SK-N-SH (cell line): ENCODE measurements at regions of chr2 and their contacts with region 1.

Region 1: DNA sequence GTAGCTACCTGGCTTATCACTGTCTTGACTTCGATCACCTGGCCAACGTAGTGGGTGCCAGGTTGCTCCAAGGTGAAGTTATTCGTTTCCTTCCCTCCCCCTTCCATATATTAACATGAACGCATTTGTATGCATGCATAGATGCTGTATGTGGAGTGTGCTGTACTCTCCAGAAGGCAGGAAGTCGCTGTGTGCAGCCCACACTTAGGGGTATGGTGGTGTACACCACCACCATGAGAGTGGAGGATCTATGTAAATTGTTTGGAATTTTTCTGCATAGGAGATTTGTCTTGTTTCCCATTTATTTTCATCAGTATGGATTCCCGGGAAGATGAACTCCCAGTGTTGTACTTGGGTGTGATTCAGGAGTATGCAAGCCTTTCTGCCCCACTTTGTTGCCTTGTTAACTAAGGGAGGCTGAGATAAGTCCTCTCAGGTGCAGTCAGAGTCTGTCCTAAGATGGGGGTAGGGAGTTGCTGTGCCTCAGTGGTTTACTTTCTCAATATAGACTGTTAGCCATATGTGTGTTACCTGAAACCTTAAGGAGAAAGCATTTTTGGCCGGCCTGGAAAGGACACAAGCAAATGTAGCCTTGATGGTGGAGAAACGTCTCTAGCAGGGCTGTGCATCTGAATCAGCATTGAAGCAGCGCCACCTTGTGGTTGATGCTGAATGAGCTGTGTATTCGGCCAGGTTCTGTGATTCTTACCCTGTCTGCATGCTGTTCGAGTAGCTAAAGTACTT is 149.8 kb downstream of the TANC1 start:
- DNase-seq: peak; percentile 70
- H3K4me3 ChIP-seq: no peak overlapping the region; a peak in 1 of 4 replicates
- H3K27ac ChIP-seq: peak overlapping the region; percentile 41 to 69
- H3K4me1 ChIP-seq: peaks cover 6 to 25% of the 10 kb centered on the region in 2 experiments; a peak in 3 of 4 replicates
- H3K27me3 ChIP-seq: no peaks in the 10 kb centered on the region
- CTCF ChIP-seq: peak; percentile 86
- EP300 ChIP-seq: no peak
- RAD21 ChIP-seq: peak; percentile 98

Region 2: DNA sequence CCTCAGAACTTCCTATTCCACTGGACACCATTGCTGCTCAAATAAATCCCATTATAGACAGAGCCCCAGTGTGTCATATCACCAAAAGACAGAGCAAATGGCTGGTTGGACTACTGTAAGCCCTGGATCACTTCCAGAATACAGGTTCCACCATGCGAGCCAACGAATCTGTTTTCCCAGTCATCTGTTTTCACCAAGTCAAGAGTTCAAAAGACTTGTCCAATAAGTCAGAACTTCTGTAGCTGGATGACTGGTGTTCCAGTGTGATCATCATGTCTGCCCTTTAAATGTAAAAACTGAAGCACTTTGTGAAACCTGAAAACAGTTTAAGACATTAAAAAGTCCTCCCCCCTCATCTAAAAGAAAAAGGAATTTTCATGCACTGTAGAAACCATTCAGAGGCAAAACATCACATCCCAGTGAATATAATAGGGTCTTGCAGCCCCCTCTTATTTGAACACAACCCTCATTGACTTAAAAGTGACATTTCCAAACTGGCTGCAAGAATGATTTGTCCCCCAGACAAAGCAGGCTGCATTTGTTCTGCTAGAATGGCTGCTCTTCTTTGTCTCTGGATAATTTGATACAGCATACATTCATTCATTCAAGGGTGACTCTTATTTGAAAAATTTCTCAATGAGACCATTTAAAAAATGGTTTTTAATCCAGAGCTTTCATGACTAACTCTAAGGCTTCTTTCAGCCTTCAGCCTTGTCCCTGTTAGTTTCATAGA is 214.4 kb before region 1 on chr2:
- CTCF ChIA-PET with region 1: interaction called, 39 read pairs
- POLR2A ChIA-PET with region 1: no interaction called
- DNase-seq: no peak
- H3K4me3 ChIP-seq: no peak overlapping the region
- H3K27ac ChIP-seq: no peak overlapping the region
- H3K4me1 ChIP-seq: peaks cover 0 to 4% of the 10 kb centered on the region in 2 experiments; a peak in 1 of 4 replicates
- H3K27me3 ChIP-seq: no peaks in the 10 kb centered on the region
- CTCF ChIP-seq: no peak
- EP300 ChIP-seq: no peak
- RAD21 ChIP-seq: no peak

Region 3: DNA sequence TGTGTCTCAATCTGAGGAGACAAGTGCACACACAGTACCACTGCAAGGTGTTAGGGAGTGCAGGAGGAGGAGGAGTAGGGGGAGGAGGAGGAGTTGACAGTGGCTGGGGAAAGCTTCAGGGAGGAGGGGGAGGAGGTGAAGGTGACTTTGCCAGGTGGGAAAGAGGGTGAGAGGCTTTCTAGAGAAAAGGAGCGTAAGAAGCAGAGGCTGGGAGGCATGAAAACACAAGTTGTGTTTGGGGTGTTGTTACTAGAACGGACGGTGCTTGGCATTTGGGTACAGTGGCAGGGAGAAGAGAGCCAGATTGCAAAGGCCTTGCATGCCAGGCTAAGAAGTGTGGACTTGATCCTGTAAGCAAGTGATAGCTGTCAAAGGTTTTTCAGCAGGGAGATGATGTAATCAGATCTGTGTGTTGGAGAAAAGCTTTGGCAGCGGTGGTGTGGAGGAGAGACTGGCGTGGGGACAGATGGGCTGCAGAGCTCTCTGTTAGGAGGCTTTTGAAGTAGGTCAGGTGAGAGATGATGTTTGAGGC is 133.6 kb before region 1 on chr2:
- CTCF ChIA-PET with region 1: interaction called, 14 read pairs
- POLR2A ChIA-PET with region 1: no interaction called
- DNase-seq: peak; percentile 39
- H3K4me3 ChIP-seq: no peak overlapping the region
- H3K27ac ChIP-seq: peak overlapping the region in 1 of 2 experiments; percentile 11; a peak in 1 of 4 replicates
- H3K4me1 ChIP-seq: peaks cover 0 to 10% of the 10 kb centered on the region in 2 experiments; a peak in 2 of 4 replicates
- H3K27me3 ChIP-seq: no peaks in the 10 kb centered on the region
- CTCF ChIP-seq: no peak
- EP300 ChIP-seq: no peak
- RAD21 ChIP-seq: no peak

Region 4: GRCh38 chr2:159053161-159054031 is 64.9 kb before region 1 on chr2:
- CTCF ChIA-PET with region 1: interaction called, 37 read pairs
- POLR2A ChIA-PET with region 1: no interaction called
- DNase-seq: peak; percentile 44
- H3K4me3 ChIP-seq: no peak overlapping the region
- H3K27ac ChIP-seq: peak overlapping the region; percentile 94 to 99
- H3K4me1 ChIP-seq: peaks cover 0 to 76% of the 10 kb centered on the region in 2 experiments; a peak in 2 of 4 replicates
- H3K27me3 ChIP-seq: no peaks in the 10 kb centered on the region
- CTCF ChIP-seq: no peak
- EP300 ChIP-seq: peak; percentile 43 to 90; a peak in 3 of 4 replicates
- RAD21 ChIP-seq: peak; percentile 22; the same call in 1 of the 2 replicates

Region 5: GRCh38 chr2:159129824-159130223 is 11.5 kb after region 1 on chr2:
- CTCF ChIA-PET with region 1: interaction called, 30 read pairs
- POLR2A ChIA-PET with region 1: no interaction called
- DNase-seq: peak; percentile 71
- H3K4me3 ChIP-seq: no peak overlapping the region
- H3K27ac ChIP-seq: peak overlapping the region; percentile 80 to 97; a peak in 3 of 4 replicates
- H3K4me1 ChIP-seq: peaks cover 28 to 51% of the 10 kb centered on the region in 2 experiments
- H3K27me3 ChIP-seq: no peaks in the 10 kb centered on the region
- CTCF ChIP-seq: no peak
- EP300 ChIP-seq: no peak
- RAD21 ChIP-seq: no peak